ENCODE measurements at regions of chr20 and their contacts with region 1.

Region 1: DNA sequence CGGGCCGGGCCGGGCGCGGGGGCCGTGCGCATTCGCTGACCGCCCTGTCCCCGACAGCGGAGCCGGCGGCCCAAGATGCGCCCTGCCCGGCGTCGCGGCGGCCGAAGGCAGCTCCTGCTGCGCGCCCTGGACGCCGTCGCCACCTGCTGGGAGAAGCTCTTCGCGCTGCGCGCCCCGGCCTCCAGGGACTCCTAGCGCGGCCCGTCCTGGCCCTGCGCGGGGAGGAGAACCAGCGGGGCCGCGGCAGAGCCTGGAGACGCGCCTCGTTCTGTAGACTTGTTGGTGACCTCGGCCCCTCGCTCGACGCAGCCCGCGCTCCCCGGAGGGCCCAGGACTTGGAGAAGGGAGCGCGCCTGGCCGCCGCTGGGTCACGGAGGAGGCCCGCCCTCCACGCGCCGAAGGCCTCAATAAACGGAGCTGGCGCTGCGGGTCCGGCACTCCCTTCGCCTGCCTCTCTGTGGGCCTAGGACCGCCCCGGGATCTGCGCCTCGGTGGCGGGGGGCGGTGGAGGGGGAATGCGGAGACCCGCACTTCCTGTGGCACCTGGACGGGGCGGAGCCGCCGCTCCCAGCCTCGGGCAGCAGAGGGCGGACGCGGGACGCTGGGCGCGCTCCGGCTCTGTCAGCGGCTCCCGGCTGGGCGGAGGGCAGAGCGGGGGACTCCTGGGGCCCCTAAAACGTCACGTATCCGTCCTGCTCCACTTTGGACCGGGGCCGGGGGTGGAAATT is 2.7 kb downstream of the C20orf204 start:
- DNase-seq: peak; percentile 68 to 93 (median 84)
- ATAC-seq: peak; percentile 90 to 94 (median 92)
- H3K4me3 ChIP-seq: peak overlapping the region; percentile 6 to 65 (median 39)
- H3K27ac ChIP-seq: peak overlapping the region; percentile 48 to 70 (median 60)
- H3K4me1 ChIP-seq: peaks cover 0 to 5% (median 0%) of the 10 kb centered on the region in 3 donors
- H3K27me3 ChIP-seq: no peaks in the 10 kb centered on the region
- CTCF ChIP-seq: peak; percentile 42 to 62 (median 48)

Region 2: DNA sequence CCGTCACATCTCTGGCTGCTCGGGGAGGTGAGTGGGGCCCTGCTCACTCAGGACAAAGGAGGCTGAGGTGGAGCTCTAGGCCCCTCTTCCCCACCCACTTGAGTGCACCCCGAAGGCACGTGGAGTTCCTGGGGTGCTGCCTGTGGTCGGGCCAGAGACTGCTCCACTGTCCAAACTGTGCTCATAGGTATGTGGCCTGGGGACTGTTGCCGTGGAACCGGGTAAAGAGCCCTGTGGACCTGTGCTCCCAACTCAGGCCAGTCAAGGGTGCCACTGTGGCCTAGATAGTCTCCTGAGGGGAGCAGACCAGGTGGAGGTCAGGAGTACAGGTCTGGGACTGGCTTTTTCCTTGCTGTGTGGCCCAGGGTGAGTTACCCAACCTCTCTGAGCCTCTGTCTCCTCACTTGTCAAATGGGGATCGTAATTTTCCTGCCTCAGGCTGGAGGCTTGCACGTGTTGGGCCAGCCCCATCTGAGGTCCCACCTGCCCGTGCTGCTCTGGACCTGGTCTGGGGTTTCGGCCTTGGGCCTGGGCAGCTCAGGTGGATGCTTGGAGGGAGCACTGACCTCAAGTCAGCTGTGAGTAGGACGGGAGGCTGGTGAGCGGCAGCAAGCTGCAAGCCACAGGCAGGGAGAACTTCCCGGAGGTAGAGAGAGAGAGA is 81.1 kb after region 1 on chr20:
- intact Hi-C with region 1: loop called in 1 of 3 experiments (anchors 10 kb)
- DNase-seq: peak in 2 of 6 donors; percentile 57 to 58
- ATAC-seq: peak in 1 of 4 donors; percentile 46
- H3K4me3 ChIP-seq: no peak overlapping the region
- H3K27ac ChIP-seq: no peak overlapping the region
- H3K4me1 ChIP-seq: no peaks in the 10 kb centered on the region
- H3K27me3 ChIP-seq: peaks cover 0 to 4% (median 0%) of the 10 kb centered on the region in 4 donors
- CTCF ChIP-seq: no peak